MCF 10A (cell line): ENCODE measurements at regions of chr19 and their contacts with region 1.

Region 1: DNA sequence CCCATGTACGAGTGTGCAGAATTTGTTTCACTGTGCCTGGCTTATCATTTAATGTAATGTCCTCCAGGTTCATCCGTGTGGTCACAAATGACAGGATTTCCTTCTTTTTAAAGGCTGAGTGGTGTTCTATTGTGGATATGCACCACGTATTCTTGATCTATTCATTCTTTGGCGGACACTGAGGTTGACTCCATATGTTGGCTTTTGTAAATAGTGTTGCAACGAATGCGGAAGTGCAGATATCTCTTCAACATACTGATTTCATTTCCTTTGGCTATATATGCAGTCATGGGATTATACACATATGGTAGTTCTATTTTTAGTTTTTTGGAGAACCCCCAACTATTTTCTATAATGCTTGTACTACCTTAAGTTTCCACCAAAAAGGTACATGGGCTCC is 13.0 kb downstream of the OR7A5 start:
- DNase-seq: no peak
- H3K4me3 Mint-ChIP-seq: no peak overlapping the region
- H3K27ac Mint-ChIP-seq: no peak overlapping the region
- H3K4me1 Mint-ChIP-seq: peaks cover 9% of the 10 kb centered on the region
- H3K27me3 Mint-ChIP-seq: no peaks in the 10 kb centered on the region
- CTCF ChIP-seq: no peak

Region 2: DNA sequence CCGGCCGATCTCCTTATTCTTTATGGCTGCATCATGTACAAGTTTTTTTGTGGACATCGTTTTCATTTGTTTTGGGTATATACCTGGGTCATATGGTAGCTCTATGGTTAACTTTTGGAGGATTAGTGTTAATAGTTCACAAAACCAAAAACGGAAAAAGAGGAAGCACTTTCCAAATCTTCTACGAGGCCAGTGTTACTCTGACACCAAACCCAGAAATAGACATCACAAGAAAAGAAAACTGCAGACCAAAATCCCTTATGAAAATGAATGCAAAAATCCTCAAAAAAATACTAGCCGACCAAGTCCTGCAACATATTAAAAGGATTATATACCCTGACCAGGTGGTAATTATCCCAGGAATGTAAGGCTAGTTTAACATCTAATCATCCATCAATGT is 73.3 kb before region 1 on chr19:
- CTCF ChIA-PET with region 1: no interaction called
- POLR2A ChIA-PET with region 1: no interaction called
- intact Hi-C with region 1: no loop called
- DNase-seq: no peak
- H3K4me3 Mint-ChIP-seq: no peak overlapping the region
- H3K27ac Mint-ChIP-seq: no peak overlapping the region
- H3K4me1 Mint-ChIP-seq: no peaks in the 10 kb centered on the region
- H3K27me3 Mint-ChIP-seq: no peaks in the 10 kb centered on the region
- CTCF ChIP-seq: no peak

Region 3: GRCh38 chr19:14761612-14762011 is 60.3 kb before region 1 on chr19:
- CTCF ChIA-PET with region 1: no interaction called
- POLR2A ChIA-PET with region 1: no interaction called
- intact Hi-C with region 1: no loop called
- DNase-seq: no peak
- H3K4me3 Mint-ChIP-seq: no peak overlapping the region
- H3K27ac Mint-ChIP-seq: no peak overlapping the region
- H3K4me1 Mint-ChIP-seq: peaks cover 6% of the 10 kb centered on the region
- H3K27me3 Mint-ChIP-seq: no peaks in the 10 kb centered on the region
- CTCF ChIP-seq: no peak

Region 4: GRCh38 chr19:14786421-14786851 is 35.5 kb before region 1 on chr19:
- CTCF ChIA-PET with region 1: interaction called, 12 read pairs
- POLR2A ChIA-PET with region 1: no interaction called
- intact Hi-C with region 1: no loop called
- DNase-seq: peak; percentile 43
- H3K4me3 Mint-ChIP-seq: no peak overlapping the region
- H3K27ac Mint-ChIP-seq: no peak overlapping the region
- H3K4me1 Mint-ChIP-seq: peaks cover 12% of the 10 kb centered on the region
- H3K27me3 Mint-ChIP-seq: no peaks in the 10 kb centered on the region
- CTCF ChIP-seq: peak; percentile 92

Region 5: DNA sequence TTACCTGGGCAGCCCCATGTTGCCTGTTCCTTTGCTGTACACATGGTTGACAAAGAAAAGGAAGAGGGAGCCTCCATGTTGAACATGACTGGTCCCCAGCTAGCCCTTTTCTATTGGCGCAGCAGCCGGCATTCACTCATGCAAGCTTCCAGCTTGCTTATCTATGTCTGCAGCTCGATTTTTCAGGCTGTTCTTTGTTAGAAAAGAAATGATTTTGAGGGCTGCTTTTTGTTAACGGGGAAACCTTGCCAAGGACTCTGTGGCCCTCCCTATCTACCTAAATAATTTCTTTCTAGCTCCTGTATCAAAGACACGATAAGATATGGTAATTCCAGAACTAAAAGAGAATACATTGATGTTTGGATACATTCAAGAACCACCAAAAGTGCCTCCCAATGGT is 23.2 kb before region 1 on chr19:
- CTCF ChIA-PET with region 1: no interaction called
- POLR2A ChIA-PET with region 1: no interaction called
- intact Hi-C with region 1: no loop called
- DNase-seq: no peak
- H3K4me3 Mint-ChIP-seq: no peak overlapping the region
- H3K27ac Mint-ChIP-seq: no peak overlapping the region
- H3K4me1 Mint-ChIP-seq: peaks cover 7% of the 10 kb centered on the region
- H3K27me3 Mint-ChIP-seq: no peaks in the 10 kb centered on the region
- CTCF ChIP-seq: no peak